Natural killer cell (primary cell): ENCODE measurements at regions of chr19 and their contacts with region 1.

Region 1: GRCh38 chr19:35213663-35214632 is 14.6 kb downstream of the FAM187B start:
- DNase-seq: peak; percentile 71 to 97
- ATAC-seq: peak; percentile 46 to 61 (median 55)
- H3K4me3 ChIP-seq: no peak overlapping the region
- H3K4me3 Mint-ChIP-seq: peak overlapping the region; percentile 38
- H3K27ac ChIP-seq: peak overlapping the region; percentile 99
- H3K27ac Mint-ChIP-seq: peak overlapping the region; percentile 95 to 96
- H3K4me1 ChIP-seq: peaks cover 72% of the 10 kb centered on the region
- H3K4me1 Mint-ChIP-seq: peaks cover 55 to 62% of the 10 kb centered on the region in 2 donors
- H3K27me3 ChIP-seq: no peaks in the 10 kb centered on the region
- H3K27me3 Mint-ChIP-seq: no peaks in the 10 kb centered on the region
- CTCF ChIP-seq: no peak

Region 2: GRCh38 chr19:35013031-35013819 is 200.7 kb before region 1 on chr19:
- intact Hi-C with region 1: loop called (anchors 5 kb)
- DNase-seq: peak; percentile 82 to 92
- ATAC-seq: peak; percentile 75 to 81 (median 78)
- H3K4me3 ChIP-seq: no peak overlapping the region
- H3K4me3 Mint-ChIP-seq: peak overlapping the region; percentile 77
- H3K27ac ChIP-seq: peak overlapping the region; percentile 67
- H3K27ac Mint-ChIP-seq: peak overlapping the region; percentile 86 to 98
- H3K4me1 ChIP-seq: peaks cover 75% of the 10 kb centered on the region
- H3K4me1 Mint-ChIP-seq: peaks cover 52 to 65% of the 10 kb centered on the region in 2 donors
- H3K27me3 ChIP-seq: no peaks in the 10 kb centered on the region
- H3K27me3 Mint-ChIP-seq: no peaks in the 10 kb centered on the region
- CTCF ChIP-seq: peak; percentile 98

Region 3: GRCh38 chr19:35140962-35141637 is 72.8 kb before region 1 on chr19:
- intact Hi-C with region 1: loop called (anchors 5 kb)
- DNase-seq: peak; percentile 84 to 94
- ATAC-seq: peak; percentile 84 to 95 (median 86)
- H3K4me3 ChIP-seq: peak overlapping the region; percentile 32
- H3K4me3 Mint-ChIP-seq: peak overlapping the region; percentile 76
- H3K27ac ChIP-seq: no peak overlapping the region
- H3K27ac Mint-ChIP-seq: peak overlapping the region; percentile 50 to 80
- H3K4me1 ChIP-seq: peaks cover 46% of the 10 kb centered on the region
- H3K4me1 Mint-ChIP-seq: peaks cover 22 to 50% of the 10 kb centered on the region in 2 donors
- H3K27me3 ChIP-seq: peaks cover 11% of the 10 kb centered on the region
- H3K27me3 Mint-ChIP-seq: peaks cover 0 to 23% of the 10 kb centered on the region in 2 donors
- CTCF ChIP-seq: no peak

Region 4: DNA sequence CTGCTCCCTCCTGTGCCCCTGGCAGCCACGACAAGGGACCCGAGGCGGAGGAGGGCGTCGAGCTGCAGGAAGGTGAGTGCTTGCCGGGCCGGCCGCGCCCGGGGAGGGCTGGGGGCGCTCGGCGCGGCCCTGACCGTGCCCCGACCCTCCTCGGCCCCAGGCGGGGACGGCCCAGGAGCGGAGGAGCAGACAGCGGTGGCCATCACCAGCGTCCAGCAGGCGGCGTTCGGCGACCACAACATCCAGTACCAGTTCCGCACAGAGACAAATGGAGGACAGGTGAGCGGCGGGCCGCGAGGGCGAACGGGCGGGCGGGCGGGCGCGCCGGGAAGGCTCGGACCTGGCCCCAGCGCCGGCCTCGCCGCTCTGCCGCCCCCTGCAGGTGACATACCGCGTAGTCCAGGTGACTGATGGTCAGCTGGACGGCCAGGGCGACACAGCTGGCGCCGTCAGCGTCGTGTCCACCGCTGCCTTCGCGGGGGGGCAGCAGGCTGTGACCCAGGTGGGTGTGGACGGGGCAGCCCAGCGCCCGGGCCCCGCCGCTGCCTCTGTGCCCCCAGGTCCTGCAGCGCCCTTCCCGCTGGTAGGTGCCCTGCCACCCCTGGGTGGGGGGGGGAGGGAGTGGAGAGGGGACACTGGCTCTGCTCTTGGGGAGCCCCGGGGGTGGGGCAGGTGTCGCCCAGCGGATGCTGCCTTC is 55.6 kb after region 1 on chr19:
- intact Hi-C with region 1: loop called (anchors 2 kb)
- DNase-seq: peak; percentile 75 to 87
- ATAC-seq: peak; percentile 57 to 71 (median 59)
- H3K4me3 ChIP-seq: peak overlapping the region; percentile 21
- H3K4me3 Mint-ChIP-seq: peak overlapping the region; percentile 79
- H3K27ac ChIP-seq: peak overlapping the region; percentile 22
- H3K27ac Mint-ChIP-seq: peak overlapping the region; percentile 74 to 81
- H3K4me1 ChIP-seq: peaks cover 63% of the 10 kb centered on the region
- H3K4me1 Mint-ChIP-seq: peaks cover 33 to 57% of the 10 kb centered on the region in 2 donors
- H3K27me3 ChIP-seq: no peaks in the 10 kb centered on the region
- H3K27me3 Mint-ChIP-seq: no peaks in the 10 kb centered on the region
- CTCF ChIP-seq: peak; percentile 83

Region 5: DNA sequence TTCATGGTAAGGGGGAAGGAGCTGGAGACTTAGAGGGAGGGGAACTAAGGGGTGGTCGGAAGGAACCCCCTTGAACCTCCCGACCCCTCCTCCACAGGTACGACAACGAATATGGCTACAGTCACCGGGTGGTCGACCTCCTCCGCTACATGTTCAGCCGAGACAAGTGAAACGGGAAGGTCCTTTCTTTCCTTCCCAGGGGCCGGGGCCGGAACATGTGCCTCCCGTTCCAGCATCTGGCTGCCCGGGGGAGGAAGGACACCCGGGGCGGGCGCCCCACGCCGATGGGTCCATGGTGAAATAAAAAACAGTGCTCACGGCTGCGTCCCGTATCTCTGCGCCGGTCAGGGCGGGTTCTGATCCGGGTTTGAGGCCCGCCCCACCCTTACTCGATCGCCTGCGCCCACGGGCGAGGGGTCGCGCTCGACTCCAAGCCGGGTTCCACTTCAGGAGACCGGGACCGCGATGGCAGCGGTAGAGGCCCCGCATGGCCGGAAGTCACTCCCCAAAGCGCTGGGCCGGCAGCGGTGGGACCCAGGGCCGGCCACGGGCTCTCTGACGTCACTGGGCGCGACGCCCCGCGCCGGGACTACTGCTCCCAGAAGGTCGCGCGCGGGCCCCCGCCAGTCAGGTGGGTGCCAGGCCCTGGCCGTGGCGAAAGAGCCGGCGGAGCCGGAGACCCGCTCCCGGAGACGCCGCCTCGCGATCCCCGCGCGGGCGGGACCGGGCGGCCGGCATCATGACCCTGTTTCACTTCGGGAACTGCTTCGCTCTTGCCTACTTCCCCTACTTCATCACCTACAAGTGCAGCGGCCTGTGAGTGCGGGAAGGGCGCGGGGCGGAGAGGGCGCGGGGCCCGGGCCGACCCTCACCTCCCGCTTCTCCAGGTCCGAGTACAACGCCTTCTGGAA is 331.3 kb after region 1 on chr19 and contains the start of gene TMEM147:
- intact Hi-C with region 1: loop called (anchors 5 kb)
- DNase-seq: peak; percentile 79 to 83
- ATAC-seq: peak; percentile 73 to 87 (median 81)
- H3K4me3 ChIP-seq: peak within 1 kb of the TSS; percentile 95
- H3K4me3 Mint-ChIP-seq: peak within 1 kb of the TSS; percentile 95
- H3K27ac ChIP-seq: peak within 1 kb of the TSS; percentile 77
- H3K27ac Mint-ChIP-seq: peak within 1 kb of the TSS; percentile 80 to 91
- H3K4me1 ChIP-seq: peaks cover 28% of the 10 kb centered on the region
- H3K4me1 Mint-ChIP-seq: peaks cover 34 to 49% of the 10 kb centered on the region in 2 donors
- H3K27me3 ChIP-seq: no peaks in the 10 kb centered on the region
- H3K27me3 Mint-ChIP-seq: no peaks in the 10 kb centered on the region
- CTCF ChIP-seq: no peak
- total RNA-seq, gene TMEM147: 30.6 to 37.9 (median 31.2) TPM